ENCODE measurements at regions of chr17 and their contacts with region 1.

Region 1: DNA sequence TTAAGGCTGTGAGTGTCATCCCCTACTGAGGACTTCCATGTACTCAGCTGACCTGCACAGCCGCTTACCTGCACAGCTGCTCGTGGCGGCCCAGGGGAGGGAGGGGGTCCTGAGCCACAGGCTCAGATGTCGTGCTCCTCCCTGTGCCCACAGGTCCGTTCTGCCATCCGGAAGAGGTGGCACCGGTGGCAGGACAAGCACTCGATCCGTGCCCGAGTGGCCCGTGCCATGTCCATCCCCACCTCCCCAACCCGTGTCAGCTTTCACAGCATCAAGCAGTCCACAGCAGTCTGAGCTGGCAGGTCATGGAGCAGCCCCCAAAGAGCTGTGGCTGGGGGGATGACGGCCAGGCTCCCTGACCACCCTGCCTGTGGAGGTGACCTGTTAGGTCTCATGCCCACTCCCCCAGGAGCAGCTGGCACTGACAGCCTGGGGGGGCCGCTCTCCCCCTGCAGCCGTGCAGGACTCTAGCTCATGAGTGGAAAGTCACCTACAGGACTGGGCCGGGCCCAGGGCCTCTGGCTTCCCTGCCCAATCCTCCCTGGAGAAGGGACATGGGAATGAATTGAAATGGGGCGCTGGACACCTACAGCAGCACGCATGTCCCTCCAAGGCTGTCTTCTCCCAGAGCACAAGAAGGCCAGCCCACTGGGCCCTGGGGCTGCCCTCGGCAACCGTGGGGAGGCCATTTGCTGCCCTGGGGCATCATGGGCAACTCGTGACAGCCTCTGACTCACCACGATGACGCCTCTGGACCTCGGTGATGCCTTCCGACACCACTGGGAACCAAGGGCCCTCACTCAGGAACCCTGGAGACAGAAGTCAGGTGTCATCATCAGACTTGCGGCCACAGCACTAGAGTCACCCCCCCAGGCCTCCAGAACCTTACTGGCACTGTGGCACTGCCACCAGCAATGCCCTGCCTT is 9.9 kb upstream of the SPPL2C start:
- DNase-seq: no peak
- ATAC-seq: no peak

Region 2: DNA sequence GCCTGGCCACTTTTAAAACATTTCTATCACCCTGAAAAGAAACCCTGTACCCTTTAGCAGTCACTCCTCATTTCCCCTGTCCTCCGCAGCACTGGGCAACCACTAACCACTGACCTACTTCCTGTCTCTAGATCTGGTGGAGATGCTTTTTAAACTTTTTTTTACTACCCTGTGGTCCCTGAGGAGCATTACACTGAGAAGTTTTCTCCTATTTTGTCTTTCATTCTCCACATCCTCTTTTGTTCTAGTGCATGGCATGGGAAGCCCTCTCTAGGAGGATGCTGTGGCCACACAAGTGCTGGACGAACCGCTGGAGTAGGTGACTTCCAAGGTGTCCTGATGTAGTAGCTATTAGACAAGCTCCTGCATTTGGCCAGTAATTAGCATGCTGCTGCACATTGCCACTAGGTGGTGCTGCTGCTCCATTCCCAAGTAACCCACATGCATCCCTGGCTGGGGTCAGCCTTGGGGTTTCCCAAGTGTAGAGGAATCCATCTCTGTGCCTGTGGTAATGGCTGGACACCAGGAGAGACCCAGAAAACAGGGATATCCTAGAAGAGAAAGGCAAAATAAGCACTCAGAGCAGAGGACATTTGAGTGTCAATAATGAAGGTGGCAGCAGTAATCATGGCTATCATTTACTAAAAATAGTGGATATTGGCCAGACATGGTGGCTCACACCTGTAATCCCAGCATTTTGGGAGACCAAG is 194.4 kb before region 1 on chr17:
- intact Hi-C with region 1: loop called (anchors 10 kb)
- DNase-seq: peak; percentile 81
- ATAC-seq: peak; percentile 84

Region 3: DNA sequence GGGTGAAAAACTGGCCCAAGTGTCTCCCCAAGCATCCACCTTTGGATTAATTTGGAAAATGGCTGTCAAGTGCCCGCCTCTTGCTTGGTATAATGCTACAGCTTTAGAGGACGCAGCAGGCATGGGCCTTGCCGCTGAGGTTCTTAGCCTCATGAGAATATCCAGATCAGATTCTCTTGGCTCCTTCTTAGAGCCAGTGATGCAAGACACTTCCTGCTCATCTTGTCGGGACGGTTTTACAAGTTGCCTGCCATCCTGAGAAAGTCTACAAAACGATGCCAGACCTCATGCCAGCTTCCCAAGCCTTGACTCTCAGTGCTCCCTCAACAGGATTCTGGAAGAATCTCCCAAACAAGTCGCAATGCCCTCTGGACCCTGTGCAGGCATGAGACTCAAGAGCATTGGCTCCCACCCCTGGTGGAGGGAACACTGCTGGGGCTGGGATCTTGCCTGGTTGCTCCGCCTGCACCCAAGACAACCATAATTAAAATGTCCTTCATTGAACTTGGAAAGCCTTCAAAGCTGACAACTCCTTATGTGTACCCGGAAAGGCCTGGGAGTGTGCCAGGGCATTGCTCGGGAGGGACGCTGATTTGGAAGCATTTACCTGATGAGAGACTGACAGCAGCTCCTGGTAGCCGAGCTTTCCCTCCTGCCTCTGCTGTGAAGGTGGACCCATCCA is 138.5 kb after region 1 on chr17:
- intact Hi-C with region 1: no loop called
- DNase-seq: no peak
- ATAC-seq: no peak